Calu3 (cell line): ENCODE measurements at regions of chr17 and their contacts with region 1.

Region 1: GRCh38 chr17:77331301-77331864 is 190.6 kb downstream of the SEC14L1 start:
- DNase-seq: peak; percentile 93
- H3K4me3 Mint-ChIP-seq: peak overlapping the region; percentile 66
- H3K27ac Mint-ChIP-seq: no peak overlapping the region
- H3K4me1 Mint-ChIP-seq: peaks cover 63% of the 10 kb centered on the region
- H3K27me3 Mint-ChIP-seq: no peaks in the 10 kb centered on the region
- CTCF ChIP-seq: peak; percentile 94

Region 2: DNA sequence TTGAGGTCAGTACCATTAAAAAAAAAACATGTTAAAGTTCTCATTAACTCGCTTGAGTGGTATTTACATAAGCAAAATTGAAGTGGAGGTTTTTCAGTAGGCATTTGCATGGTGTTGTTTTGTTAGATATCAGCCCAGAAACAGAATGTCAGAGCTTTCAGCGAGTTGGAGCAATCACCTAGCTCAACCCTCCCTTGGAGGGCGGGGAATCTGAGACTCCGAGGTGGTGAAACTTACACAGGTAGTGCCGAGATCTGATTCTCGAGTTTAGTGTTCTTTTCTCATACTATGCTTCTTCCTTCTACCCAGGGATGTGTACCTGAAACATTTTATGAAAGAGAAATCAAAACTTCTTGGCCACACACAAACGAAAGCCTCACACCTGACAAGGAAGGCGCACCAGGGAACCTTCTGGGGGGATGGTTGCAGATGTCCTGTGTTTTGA is 184.0 kb before region 1 on chr17:
- CTCF ChIA-PET with region 1: no interaction called
- intact Hi-C with region 1: no loop called
- DNase-seq: no peak
- H3K4me3 Mint-ChIP-seq: no peak overlapping the region
- H3K27ac Mint-ChIP-seq: no peak overlapping the region
- H3K4me1 Mint-ChIP-seq: peaks cover 35% of the 10 kb centered on the region
- H3K27me3 Mint-ChIP-seq: no peaks in the 10 kb centered on the region
- CTCF ChIP-seq: no peak

Region 3: DNA sequence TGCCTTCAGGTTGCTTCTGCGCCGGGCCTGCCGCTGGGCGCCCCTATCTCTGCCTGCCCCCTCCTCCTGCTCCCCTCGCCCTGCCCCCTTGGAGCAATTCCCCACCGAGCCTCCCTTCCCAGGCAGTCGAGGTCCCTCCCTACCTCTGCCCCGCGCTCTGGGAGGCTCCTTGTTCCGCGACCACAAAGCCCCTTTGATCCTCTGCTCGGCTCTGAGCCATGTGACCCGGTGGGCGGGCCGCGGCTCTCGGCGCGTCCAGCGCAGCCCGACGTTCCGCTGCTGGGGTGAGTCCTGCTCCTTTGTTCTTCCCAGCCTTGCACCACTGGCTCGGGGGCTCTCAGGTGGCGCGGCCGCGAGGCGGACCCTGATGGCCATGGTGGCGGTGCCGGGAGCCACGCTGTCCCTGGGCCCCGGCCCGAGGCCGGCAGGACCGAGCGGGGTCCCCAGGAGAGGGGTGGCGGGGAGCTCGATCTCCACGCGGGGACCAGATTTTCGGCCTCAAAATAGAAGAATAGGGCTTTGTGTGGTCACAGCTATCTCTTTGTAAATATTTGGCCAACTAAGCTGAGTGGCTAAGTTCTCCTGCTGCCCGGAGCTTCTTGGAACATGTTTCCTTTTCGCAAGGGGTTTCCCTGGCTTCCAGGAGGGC is 120.0 kb after region 1 on chr17:
- CTCF ChIA-PET with region 1: no interaction called
- intact Hi-C with region 1: loop called (anchors 10 kb)
- DNase-seq: peak; percentile 92
- H3K4me3 Mint-ChIP-seq: peak overlapping the region; percentile 84
- H3K27ac Mint-ChIP-seq: peak overlapping the region; percentile 91
- H3K4me1 Mint-ChIP-seq: peaks cover 78% of the 10 kb centered on the region
- H3K27me3 Mint-ChIP-seq: no peaks in the 10 kb centered on the region
- CTCF ChIP-seq: no peak

Region 4: GRCh38 chr17:77494664-77495435 is 163.5 kb after region 1 on chr17:
- CTCF ChIA-PET with region 1: interaction called, 4 read pairs
- intact Hi-C with region 1: loop called (anchors 5 kb)
- DNase-seq: peak; percentile 84
- H3K4me3 Mint-ChIP-seq: no peak overlapping the region
- H3K27ac Mint-ChIP-seq: no peak overlapping the region
- H3K4me1 Mint-ChIP-seq: no peaks in the 10 kb centered on the region
- H3K27me3 Mint-ChIP-seq: no peaks in the 10 kb centered on the region
- CTCF ChIP-seq: peak; percentile 95